Ovary (tissue), 10 donors: ENCODE measurements at regions of chr1 and their contacts with region 1.

Region 1: GRCh38 chr1:27525296-27526272 is 35.6 kb upstream of the WASF2 start:
- DNase-seq: peak; percentile 75 to 83 (median 82)
- H3K4me3 ChIP-seq: peak overlapping the region; percentile 16
- H3K27ac ChIP-seq: peak overlapping the region; percentile 46 to 98
- H3K4me1 ChIP-seq: peaks cover 53% of the 10 kb centered on the region
- H3K27me3 ChIP-seq: no peaks in the 10 kb centered on the region
- CTCF ChIP-seq: no peak
- EP300 ChIP-seq: no peak
- POLR2A ChIP-seq: no peak

Region 2: GRCh38 chr1:27275696-27276095 is 249.9 kb before region 1 on chr1:
- intact Hi-C with region 1: no loop called
- DNase-seq: no peak
- H3K4me3 ChIP-seq: no peak overlapping the region
- H3K27ac ChIP-seq: no peak overlapping the region
- H3K4me1 ChIP-seq: no peaks in the 10 kb centered on the region
- H3K27me3 ChIP-seq: no peaks in the 10 kb centered on the region
- CTCF ChIP-seq: no peak
- EP300 ChIP-seq: no peak
- POLR2A ChIP-seq: no peak

Region 3: DNA sequence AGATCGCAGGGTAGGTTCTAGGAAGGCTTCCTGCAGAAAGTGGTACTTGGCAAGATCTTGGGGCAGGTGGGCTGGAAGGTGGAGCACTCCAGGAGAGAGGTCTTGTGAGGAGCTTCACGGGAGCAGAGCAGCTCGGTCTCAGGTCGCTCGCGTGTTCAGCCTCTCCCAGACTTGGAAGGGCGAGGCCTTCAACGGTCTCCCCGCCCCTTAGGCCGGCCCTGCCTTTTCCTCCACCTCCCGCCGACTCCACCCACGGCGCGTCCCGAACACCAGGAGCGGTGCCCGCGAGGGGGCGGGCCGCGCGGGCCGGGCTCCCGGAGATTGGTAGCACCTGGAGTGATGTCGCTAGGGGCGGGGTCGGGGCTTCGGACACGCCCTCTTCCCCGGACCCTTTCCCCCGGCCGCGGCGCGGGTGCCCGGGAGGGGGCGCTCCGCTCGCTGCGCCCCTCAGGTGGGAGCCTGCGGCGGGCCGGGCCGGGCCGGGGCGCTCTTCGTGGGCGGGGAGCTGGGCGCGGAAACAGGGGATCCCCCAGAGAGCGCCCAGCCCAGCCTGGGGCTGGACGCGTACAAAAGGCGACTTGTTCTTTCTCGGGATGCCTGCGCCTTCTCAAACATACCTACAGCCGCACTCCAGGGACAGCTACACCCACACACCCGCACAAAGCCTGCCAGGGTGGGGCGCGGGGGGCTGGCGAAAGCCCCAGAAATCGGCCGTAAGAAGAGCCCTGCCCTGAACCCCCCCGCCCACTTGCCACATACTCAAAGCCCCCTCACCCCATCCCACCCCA is 42.9 kb after region 1 on chr1:
- intact Hi-C with region 1: loop called in 2 of 4 experiments (anchors 5 to 10 kb)
- DNase-seq: peak; percentile 96 to 98 (median 96)
- H3K4me3 ChIP-seq: peak overlapping the region; percentile 34
- H3K27ac ChIP-seq: peak overlapping the region; percentile 88 to 89
- H3K4me1 ChIP-seq: peaks cover 70% of the 10 kb centered on the region
- H3K27me3 ChIP-seq: no peaks in the 10 kb centered on the region
- CTCF ChIP-seq: peak; percentile 72 to 94 (median 83)
- EP300 ChIP-seq: peak; percentile 54
- POLR2A ChIP-seq: no peak

Region 4: GRCh38 chr1:27574871-27575831 is 49.6 kb after region 1 on chr1:
- intact Hi-C with region 1: loop called in 1 of 4 experiments (anchors 10 kb)
- DNase-seq: peak; percentile 83 to 90 (median 87)
- H3K4me3 ChIP-seq: peak overlapping the region; percentile 51
- H3K27ac ChIP-seq: peak overlapping the region; percentile 63 to 89
- H3K4me1 ChIP-seq: peaks cover 52% of the 10 kb centered on the region
- H3K27me3 ChIP-seq: no peaks in the 10 kb centered on the region
- CTCF ChIP-seq: peak in 1 of 3 donors; percentile 42
- EP300 ChIP-seq: no peak
- POLR2A ChIP-seq: peak; percentile 36